H1 (cell line): ENCODE measurements at regions of chr1 and their contacts with region 1.

Region 1: DNA sequence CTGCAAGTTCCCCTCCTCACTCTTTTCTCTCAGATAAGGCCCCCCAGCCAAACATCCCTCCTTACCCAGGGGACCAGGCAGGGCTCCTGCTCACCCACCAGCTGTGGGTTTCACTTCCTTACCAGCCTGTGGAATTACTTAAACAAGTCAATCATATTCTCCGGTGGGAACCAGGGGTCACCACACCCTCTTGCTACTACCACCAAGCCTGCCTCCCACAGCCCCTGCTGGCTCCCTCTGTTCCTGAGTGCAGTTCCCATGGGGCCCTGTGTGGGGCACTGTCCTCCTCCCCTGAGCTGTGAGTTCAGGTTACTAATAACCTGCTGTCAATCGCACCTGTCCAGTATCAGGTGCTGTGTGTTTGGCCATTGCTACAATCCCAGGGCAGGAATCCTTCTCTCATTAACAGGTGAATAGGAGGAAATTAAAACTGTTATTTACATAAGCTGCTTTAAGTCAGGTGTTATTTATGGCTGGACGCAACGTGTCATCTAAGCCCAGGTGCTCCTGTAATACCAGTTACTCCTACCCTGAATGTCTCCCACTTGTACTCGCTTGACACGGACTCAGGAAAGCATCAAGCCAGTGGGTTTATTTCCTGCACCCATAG is 53.1 kb upstream of the LBR start:
- DNase-seq: peak in 1 of 2 experiments; percentile 95
- H3K4me3 ChIP-seq: no peak overlapping the region
- H3K27ac ChIP-seq: no peak overlapping the region
- H3K4me1 ChIP-seq: peaks cover 0 to 2% (median under 1%) of the 10 kb centered on the region in 4 experiments; a peak in 2 of 7 replicates
- H3K27me3 ChIP-seq: no peaks in the 10 kb centered on the region
- CTCF ChIP-seq: peak; percentile 91 to 98 (median 97)
- EP300 ChIP-seq: no peak
- POLR2A ChIP-seq: no peak
- RAD21 ChIP-seq: peak; percentile 88 to 91

Region 2: GRCh38 chr1:225378880-225379279 is 102.0 kb before region 1 on chr1:
- CTCF ChIA-PET with region 1: no interaction called
- POLR2A ChIA-PET with region 1: no interaction called
- DNase-seq: peak; percentile 61 to 78
- H3K4me3 ChIP-seq: no peak overlapping the region
- H3K27ac ChIP-seq: no peak overlapping the region
- H3K4me1 ChIP-seq: peaks cover 0 to 5% (median under 1%) of the 10 kb centered on the region in 4 experiments; a peak in 2 of 7 replicates
- H3K27me3 ChIP-seq: no peaks in the 10 kb centered on the region
- CTCF ChIP-seq: no peak
- EP300 ChIP-seq: no peak
- POLR2A ChIP-seq: no peak
- RAD21 ChIP-seq: no peak

Region 3: DNA sequence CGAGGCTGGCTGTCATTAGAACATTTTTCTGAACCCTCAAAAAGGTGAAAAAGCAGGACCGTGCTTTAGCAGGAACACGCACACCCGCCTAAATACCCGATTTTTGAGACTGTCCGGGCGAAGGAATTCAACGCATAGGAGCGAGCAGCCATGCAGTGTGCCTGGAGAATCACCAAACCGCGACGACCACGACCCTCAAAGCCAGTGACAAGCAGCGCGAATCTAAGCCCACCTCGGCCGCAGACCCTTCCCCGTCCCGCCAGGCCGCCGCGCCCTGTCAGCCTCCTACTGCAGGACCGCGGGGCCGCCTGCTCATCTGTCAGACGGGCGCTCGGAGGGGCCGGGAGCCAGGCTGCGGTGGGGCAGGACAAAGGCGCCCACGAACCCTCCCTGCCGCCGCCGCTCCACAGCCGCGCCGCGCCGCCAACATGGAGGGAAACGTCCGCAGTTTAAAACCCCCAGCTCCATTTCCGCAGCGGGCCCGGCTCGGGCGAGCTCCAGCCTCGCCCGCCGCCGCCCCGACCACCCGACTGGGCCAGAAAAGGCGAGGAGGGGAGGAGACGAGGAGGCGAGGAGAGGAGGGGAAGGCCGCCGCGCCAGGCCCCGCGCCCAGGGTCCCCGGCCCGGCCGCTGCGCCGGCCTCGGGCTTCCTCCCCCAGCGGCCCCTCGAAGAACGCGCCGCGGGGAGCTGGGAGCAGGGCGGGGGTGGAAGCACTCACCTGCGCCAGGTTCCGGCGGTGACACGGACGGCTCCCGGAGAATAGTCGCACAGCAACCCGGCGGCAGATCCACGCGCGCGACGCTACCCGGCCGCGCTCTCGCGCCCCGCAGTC is 53.5 kb before region 1 on chr1 and contains the start of gene LBR:
- CTCF ChIA-PET with region 1: no interaction called
- POLR2A ChIA-PET with region 1: no interaction called
- DNase-seq: no peak
- H3K4me3 ChIP-seq: peak within 1 kb of the TSS; percentile 63 to 91 (median 84)
- H3K27ac ChIP-seq: peak within 1 kb of the TSS; percentile 70; the same call in 1 of the 2 replicates
- H3K4me1 ChIP-seq: peaks cover 3 to 13% (median 12%) of the 10 kb centered on the region in 4 experiments
- H3K27me3 ChIP-seq: peaks cover 0 to 3% (median 1%) of the 10 kb centered on the region in 4 experiments; a peak in 2 of 7 replicates
- CTCF ChIP-seq: no peak
- EP300 ChIP-seq: no peak
- POLR2A ChIP-seq: no peak; a peak in 1 of 3 replicates
- RAD21 ChIP-seq: no peak
- total RNA-seq, gene LBR: 89.8 and 93.0 TPM in 2 replicates

Region 4: DNA sequence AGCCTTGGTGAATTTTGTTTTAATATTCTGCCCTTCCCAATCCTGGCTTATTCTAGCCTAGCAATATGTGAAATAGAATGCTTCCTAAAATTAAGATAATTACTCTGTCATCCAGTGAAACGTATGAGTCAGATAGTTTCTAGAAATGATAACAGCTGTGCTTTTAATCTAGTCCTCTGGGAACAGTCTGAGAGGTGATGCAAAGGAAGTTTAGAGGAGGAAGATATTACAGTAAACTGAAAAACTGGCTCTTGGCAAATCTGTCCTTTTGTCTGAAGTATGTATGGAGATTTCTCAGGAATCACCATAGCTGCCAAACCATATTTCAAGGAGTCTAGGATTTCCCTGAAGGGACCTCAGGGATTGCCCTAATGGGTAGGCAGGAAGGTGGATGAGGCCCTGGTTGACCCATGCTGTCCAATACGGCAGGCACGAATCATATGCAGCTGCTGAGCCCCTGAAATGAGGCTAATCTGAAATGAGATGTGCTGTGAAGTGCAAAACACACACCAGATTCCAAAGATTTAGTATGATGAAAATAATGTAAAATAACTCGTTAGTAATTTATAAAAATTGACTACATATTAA is 17.7 kb after region 1 on chr1:
- CTCF ChIA-PET with region 1: interaction called, 38 read pairs
- POLR2A ChIA-PET with region 1: no interaction called
- DNase-seq: no peak
- H3K4me3 ChIP-seq: no peak overlapping the region
- H3K27ac ChIP-seq: no peak overlapping the region
- H3K4me1 ChIP-seq: peaks cover 0 to 7% (median 3%) of the 10 kb centered on the region in 4 experiments; a peak in 6 of 7 replicates
- H3K27me3 ChIP-seq: no peaks in the 10 kb centered on the region
- CTCF ChIP-seq: no peak
- EP300 ChIP-seq: no peak
- POLR2A ChIP-seq: no peak
- RAD21 ChIP-seq: no peak

Region 5: DNA sequence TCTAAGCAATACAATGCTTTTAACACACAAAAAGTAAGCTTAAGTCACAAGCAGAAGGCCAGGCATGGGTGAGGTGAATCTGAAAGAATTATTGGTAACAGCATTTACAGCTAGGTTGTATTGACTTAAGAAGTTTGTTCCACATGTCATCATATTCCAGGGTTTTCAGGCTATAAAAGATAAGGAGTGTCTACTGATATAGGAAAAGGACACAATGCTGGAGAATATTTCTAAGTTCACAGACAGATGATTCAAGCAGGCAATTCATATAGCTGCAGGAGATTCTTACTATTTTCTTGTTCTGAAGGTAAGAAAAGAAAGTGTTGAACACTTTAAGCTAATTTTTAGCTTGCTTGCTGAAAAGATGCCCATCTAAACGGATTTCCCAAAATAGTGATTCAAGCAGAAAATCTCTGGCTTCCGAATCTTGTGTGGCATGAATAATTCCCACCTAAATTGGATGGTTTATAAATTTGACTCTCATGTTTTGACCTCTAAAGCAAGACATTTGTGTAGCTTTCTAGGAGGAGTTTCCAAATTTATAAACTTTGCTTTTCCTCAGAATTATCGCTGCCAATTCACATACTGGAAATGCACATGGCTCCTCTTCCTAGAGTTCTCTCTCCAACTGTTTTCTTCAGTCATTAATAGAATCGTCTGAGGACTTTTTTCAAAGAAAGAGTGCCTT is 42.5 kb after region 1 on chr1:
- CTCF ChIA-PET with region 1: interaction called, 15 read pairs
- POLR2A ChIA-PET with region 1: no interaction called
- DNase-seq: no peak
- H3K4me3 ChIP-seq: no peak overlapping the region
- H3K27ac ChIP-seq: no peak overlapping the region
- H3K4me1 ChIP-seq: peaks cover 4 to 8% (median 8%) of the 10 kb centered on the region in 4 experiments; a peak in 6 of 7 replicates
- H3K27me3 ChIP-seq: no peaks in the 10 kb centered on the region
- CTCF ChIP-seq: no peak
- EP300 ChIP-seq: no peak
- POLR2A ChIP-seq: no peak
- RAD21 ChIP-seq: no peak

Region 6: DNA sequence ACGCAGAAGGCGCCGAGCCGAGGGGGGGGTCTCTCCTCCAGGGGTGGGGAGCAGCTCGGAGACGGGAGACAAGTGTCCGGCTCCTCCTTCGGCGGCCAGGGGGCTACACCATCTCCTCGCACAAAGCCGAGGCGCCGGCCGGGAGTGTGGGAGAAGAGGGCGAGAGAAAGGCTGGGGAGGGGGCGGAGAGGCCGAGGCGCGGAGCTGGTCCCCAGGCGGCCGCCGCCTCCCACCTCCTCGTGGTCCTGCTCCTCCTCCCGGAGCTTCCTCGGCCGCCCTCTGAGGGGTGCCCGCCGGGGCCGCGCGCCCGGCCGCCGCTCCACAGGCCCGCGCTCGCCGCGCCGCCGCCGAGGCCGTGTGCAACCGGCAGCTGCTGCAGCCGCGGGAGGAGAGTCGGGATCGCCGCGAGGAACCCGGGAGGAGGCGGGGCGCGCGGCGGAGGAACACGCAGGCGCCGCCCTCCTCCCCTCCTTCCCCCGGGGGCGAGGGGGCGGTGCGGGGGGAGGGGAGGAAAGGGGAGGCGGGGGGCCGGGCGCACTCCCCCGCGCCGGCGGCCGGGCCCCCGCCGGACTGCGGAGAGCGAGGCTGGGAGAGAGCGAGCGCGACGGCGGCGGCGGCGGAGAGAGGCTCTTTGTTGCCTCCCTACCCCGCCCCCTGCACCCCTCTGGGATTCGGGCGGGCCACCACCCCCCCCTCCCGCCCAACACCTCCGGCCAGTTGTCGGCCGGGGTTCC is 172.0 kb after region 1 on chr1 and contains the start of gene ENAH:
- CTCF ChIA-PET with region 1: interaction called, 43 read pairs
- POLR2A ChIA-PET with region 1: interaction called, 19 read pairs
- DNase-seq: peak in 1 of 2 experiments; percentile 83
- H3K4me3 ChIP-seq: peak within 1 kb of the TSS; percentile 94 to 100 (median 96)
- H3K27ac ChIP-seq: peak within 1 kb of the TSS; percentile 93
- H3K4me1 ChIP-seq: peaks cover 0 to 3% (median 0%) of the 10 kb centered on the region in 4 experiments; a peak in 2 of 7 replicates
- H3K27me3 ChIP-seq: no peaks in the 10 kb centered on the region
- CTCF ChIP-seq: no peak
- EP300 ChIP-seq: peak in 1 of 2 experiments; percentile 67; a peak in 1 of 3 replicates
- POLR2A ChIP-seq: peak in 1 of 2 experiments; percentile 84; a peak in 2 of 3 replicates
- RAD21 ChIP-seq: no peak
- total RNA-seq, gene ENAH: 318 and 335 TPM in 2 replicates

Region 7: DNA sequence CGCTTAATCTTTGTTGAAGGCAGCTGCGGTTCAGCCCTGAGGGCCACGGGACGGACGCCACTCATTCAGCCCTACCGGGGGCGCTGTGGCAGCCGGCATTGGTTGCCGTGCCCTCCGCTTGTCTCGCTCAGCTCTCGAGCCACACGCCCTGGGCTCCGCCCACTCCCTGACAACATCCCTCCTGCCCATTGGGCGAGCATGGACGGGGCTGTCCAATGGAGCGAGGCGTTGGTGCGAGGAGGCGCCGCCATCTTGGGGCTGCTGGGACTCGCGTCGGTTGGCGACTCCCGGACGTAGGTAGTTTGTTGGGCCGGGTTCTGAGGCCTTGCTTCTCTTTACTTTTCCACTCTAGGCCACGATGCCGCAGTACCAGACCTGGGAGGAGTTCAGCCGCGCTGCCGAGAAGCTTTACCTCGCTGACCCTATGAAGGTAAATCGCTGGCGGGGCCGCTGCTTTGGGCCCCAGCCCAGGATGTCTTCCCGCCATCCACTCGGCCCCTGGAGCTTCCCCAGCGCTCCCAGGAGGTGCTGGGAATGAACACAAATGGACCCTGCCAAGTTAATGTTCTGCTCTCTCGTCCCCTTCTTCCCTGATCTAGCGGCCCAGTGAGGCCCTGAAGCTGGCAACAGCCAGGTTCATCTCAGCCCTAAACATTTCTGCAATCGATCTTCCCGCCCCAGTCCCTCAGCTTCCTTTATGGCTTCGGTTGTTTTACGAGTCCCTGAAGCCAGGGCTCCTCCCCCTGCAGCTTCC is 296.8 kb after region 1 on chr1 and contains the start of gene SRP9:
- CTCF ChIA-PET with region 1: interaction called, 229 read pairs
- POLR2A ChIA-PET with region 1: interaction called, 20 read pairs
- DNase-seq: peak; percentile 98 to 99
- H3K4me3 ChIP-seq: peak within 1 kb of the TSS; percentile 92 to 99 (median 96)
- H3K27ac ChIP-seq: peak within 1 kb of the TSS; percentile 99
- H3K4me1 ChIP-seq: peaks cover 1 to 5% (median 4%) of the 10 kb centered on the region in 4 experiments; a peak in 6 of 7 replicates
- H3K27me3 ChIP-seq: no peaks in the 10 kb centered on the region
- CTCF ChIP-seq: peak; percentile 78 to 96 (median 92)
- EP300 ChIP-seq: no peak
- POLR2A ChIP-seq: peak; percentile 89 to 95
- RAD21 ChIP-seq: peak; percentile 69 to 72
- total RNA-seq, gene SRP9: 446 and 448 TPM in 2 replicates

Region 8: GRCh38 chr1:225923692-225924555 is 443.0 kb after region 1 on chr1 and contains the start of gene PYCR2:
- CTCF ChIA-PET with region 1: interaction called, 10 read pairs
- POLR2A ChIA-PET with region 1: no interaction called
- DNase-seq: peak; percentile 88 to 92
- H3K4me3 ChIP-seq: peak within 1 kb of the TSS; percentile 91 to 97 (median 93)
- H3K27ac ChIP-seq: peak within 1 kb of the TSS; percentile 69
- H3K4me1 ChIP-seq: peaks cover 0 to 9% (median 5%) of the 10 kb centered on the region in 4 experiments; a peak in 4 of 7 replicates
- H3K27me3 ChIP-seq: no peaks in the 10 kb centered on the region
- CTCF ChIP-seq: peak in 1 of 3 experiments; percentile 7; a peak in 1 of 4 replicates
- EP300 ChIP-seq: no peak
- POLR2A ChIP-seq: peak in 1 of 2 experiments; percentile 87; a peak in 2 of 3 replicates
- RAD21 ChIP-seq: no peak; a peak in 1 of 4 replicates
- total RNA-seq, gene PYCR2: 84.3 and 84.6 TPM in 2 replicates